ENCODE measurements at regions of chr2 and their contacts with region 1.

Region 1: DNA sequence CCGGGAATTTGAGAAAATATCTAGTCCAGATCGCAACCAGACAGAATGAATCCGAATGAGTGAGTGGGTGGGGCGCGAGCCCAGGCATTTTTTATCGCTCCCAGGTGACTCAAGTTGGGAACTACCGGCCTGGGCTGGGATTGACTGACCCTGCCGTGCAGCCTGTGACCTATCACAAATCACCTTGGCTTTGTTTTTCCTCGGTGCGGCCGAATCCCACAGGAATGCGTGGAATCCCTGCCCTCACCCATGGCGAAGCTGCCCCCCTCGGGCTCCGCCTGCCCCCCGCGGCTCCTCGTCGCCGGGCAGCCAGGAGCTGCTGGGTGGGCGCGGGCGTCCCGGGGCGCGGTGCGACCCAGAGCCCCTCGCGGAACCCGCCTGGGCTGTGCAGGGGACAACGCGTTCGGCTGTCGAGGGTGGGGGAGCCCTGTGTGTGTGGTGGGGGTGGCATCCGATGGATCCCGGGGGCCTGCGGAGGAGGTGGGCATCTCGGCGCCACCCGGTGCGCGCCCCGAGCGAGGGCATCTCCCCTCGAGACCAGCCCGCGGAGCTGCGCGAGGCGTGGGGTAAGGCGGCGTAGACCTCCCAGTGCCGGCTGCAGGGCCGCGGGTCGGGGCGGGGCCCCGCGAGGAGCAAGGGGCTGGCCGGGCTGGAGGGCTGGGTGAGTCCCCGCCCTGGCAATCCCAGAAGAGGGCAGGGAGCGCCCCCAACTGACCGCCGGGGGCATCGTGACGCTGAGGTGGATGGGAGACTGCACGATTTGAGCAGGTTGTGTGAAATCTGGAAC is 16.5 kb downstream of the B3GNT7 start:
- DNase-seq: peak; percentile 86

Region 2: GRCh38 chr2:231099918-231100317 is 312.1 kb before region 1 on chr2:
- in situ Hi-C with region 1: loop called (anchors 25 kb)
- DNase-seq: peak; percentile 11